ENCODE measurements at regions of chr7 and their contacts with region 1.

Region 1: GRCh38 chr7:100177045-100178001 is at the starts of genes GPC2 and STAG3:
- DNase-seq: peak; percentile 89 to 98 (median 97)
- ATAC-seq: peak; percentile 92
- H3K4me3 ChIP-seq: peak within 1 kb of the TSS; percentile 52 to 61
- H3K4me3 Mint-ChIP-seq: peak within 1 kb of the TSS; percentile 74
- H3K27ac ChIP-seq: peak within 1 kb of the TSS in 1 of 2 experiments; percentile 6
- H3K27ac Mint-ChIP-seq: peak within 1 kb of the TSS; percentile 80
- H3K4me1 ChIP-seq: peaks cover 33% of the 10 kb centered on the region
- H3K4me1 Mint-ChIP-seq: peaks cover 43% of the 10 kb centered on the region
- H3K27me3 ChIP-seq: peaks cover 0 to under 1% of the 10 kb centered on the region in 2 experiments
- H3K27me3 Mint-ChIP-seq: no peaks in the 10 kb centered on the region
- CTCF ChIP-seq: no peak
- total RNA-seq, gene GPC2: 10.5 to 13.3 TPM
- total RNA-seq, gene STAG3: 6.3 to 6.6 TPM

Region 2: DNA sequence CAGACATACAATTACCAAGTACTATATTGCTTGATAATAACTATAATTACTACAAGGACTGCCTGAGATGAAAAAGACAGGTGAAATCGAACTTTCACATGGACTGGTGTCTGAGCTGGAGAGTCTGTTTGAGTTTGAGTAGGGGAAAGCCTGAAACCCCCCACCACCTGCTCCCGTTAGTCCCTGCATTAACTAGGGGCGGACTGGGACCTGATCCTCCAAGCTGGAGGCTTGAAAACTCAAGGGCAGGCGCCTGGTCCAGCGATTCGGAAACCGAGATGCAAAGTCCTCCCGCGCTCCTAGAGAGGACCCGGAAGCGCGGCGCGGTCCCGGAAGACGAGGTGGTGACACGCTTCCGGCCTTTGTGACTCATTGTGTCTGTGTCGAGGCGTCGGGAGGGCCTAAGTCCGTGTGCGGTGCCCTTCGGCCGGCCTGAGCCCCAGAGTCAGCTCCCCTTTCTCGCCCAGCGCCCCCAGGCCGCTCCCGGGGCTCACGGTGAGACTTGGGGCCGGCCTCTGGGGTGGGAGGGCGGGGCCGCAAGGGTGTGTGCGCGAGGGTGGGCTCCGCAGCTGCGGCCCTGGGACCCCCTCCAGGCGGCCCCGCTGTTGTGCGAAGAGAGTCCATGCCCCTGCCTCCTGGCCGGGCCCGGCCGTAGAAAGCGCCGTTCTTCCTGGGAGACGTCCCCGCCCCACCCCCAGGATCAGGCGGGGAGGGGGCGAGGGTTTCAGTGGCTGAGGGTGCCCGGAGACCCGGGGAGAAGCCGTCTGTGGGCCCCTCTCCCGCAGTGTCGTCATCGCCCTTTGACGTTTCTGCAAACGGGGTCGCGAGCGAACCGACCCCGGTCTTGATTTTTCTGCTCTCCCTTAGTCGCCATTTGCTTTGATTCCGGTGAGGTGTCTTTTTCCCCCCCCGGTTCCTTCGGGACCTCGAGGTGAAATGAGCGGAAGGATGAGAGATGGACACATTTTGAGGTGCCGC is 161.8 kb before region 1 on chr7 and contains the start of gene ZKSCAN1:
- CTCF ChIA-PET with region 1: no interaction called
- POLR2A ChIA-PET with region 1: no interaction called
- intact Hi-C with region 1: no loop called
- DNase-seq: peak; percentile 67 to 95 (median 83)
- ATAC-seq: peak; percentile 91
- H3K4me3 ChIP-seq: peak within 1 kb of the TSS; percentile 61 to 100
- H3K4me3 Mint-ChIP-seq: peak within 1 kb of the TSS; percentile 95
- H3K27ac ChIP-seq: peak within 1 kb of the TSS; percentile 82 to 97
- H3K27ac Mint-ChIP-seq: peak within 1 kb of the TSS; percentile 98
- H3K4me1 ChIP-seq: peaks cover 22% of the 10 kb centered on the region
- H3K4me1 Mint-ChIP-seq: peaks cover 52% of the 10 kb centered on the region
- H3K27me3 ChIP-seq: no peaks in the 10 kb centered on the region
- H3K27me3 Mint-ChIP-seq: no peaks in the 10 kb centered on the region
- CTCF ChIP-seq: no peak
- total RNA-seq, gene ZKSCAN1: 30.0 to 35.9 TPM

Region 3: GRCh38 chr7:100065452-100066186 is 111.7 kb before region 1 on chr7:
- CTCF ChIA-PET with region 1: no interaction called
- POLR2A ChIA-PET with region 1: no interaction called
- intact Hi-C with region 1: no loop called
- DNase-seq: no peak
- ATAC-seq: no peak
- H3K4me3 ChIP-seq: no peak overlapping the region
- H3K4me3 Mint-ChIP-seq: no peak overlapping the region
- H3K27ac ChIP-seq: no peak overlapping the region
- H3K27ac Mint-ChIP-seq: no peak overlapping the region
- H3K4me1 ChIP-seq: no peaks in the 10 kb centered on the region
- H3K4me1 Mint-ChIP-seq: no peaks in the 10 kb centered on the region
- H3K27me3 ChIP-seq: no peaks in the 10 kb centered on the region
- H3K27me3 Mint-ChIP-seq: no peaks in the 10 kb centered on the region
- CTCF ChIP-seq: no peak

Region 4: GRCh38 chr7:100126931-100127865 is 50.1 kb before region 1 on chr7 and contains the start of gene MBLAC1:
- CTCF ChIA-PET with region 1: interaction called, 15 read pairs
- POLR2A ChIA-PET with region 1: interaction called, 4 read pairs
- intact Hi-C with region 1: loop called in 1 of 2 experiments (anchors 5 kb)
- DNase-seq: peak; percentile 83 to 97 (median 93)
- ATAC-seq: peak; percentile 83
- H3K4me3 ChIP-seq: peak within 1 kb of the TSS; percentile 81 to 99
- H3K4me3 Mint-ChIP-seq: peak within 1 kb of the TSS; percentile 100
- H3K27ac ChIP-seq: peak within 1 kb of the TSS; percentile 92 to 98
- H3K27ac Mint-ChIP-seq: peak within 1 kb of the TSS; percentile 100
- H3K4me1 ChIP-seq: peaks cover 24% of the 10 kb centered on the region
- H3K4me1 Mint-ChIP-seq: peaks cover 39% of the 10 kb centered on the region
- H3K27me3 ChIP-seq: no peaks in the 10 kb centered on the region
- H3K27me3 Mint-ChIP-seq: no peaks in the 10 kb centered on the region
- CTCF ChIP-seq: no peak
- total RNA-seq, gene MBLAC1: 4.2 to 4.6 TPM

Region 5: GRCh38 chr7:100208911-100209408 is 31.6 kb after region 1 on chr7:
- CTCF ChIA-PET with region 1: no interaction called
- POLR2A ChIA-PET with region 1: interaction called, 4 read pairs
- intact Hi-C with region 1: loop called in 1 of 2 experiments (anchors 5 kb)
- DNase-seq: peak in 3 of 9 experiments; percentile 27 to 56 (median 43)
- ATAC-seq: peak; percentile 32
- H3K4me3 ChIP-seq: no peak overlapping the region
- H3K4me3 Mint-ChIP-seq: peak overlapping the region; percentile 13
- H3K27ac ChIP-seq: no peak overlapping the region
- H3K27ac Mint-ChIP-seq: peak overlapping the region; percentile 66
- H3K4me1 ChIP-seq: peaks cover 55% of the 10 kb centered on the region
- H3K4me1 Mint-ChIP-seq: peaks cover 53% of the 10 kb centered on the region
- H3K27me3 ChIP-seq: no peaks in the 10 kb centered on the region
- H3K27me3 Mint-ChIP-seq: no peaks in the 10 kb centered on the region
- CTCF ChIP-seq: no peak